CD4-positive, alpha-beta memory T cell (primary cell): ENCODE measurements at regions of chr5 and their contacts with region 1.

Region 1: GRCh38 chr5:173917788-173918786 is 29.9 kb downstream of the CPEB4 start:
- DNase-seq: peak; percentile 78 to 87 (median 83)
- H3K4me3 ChIP-seq: peak overlapping the region; percentile 49 to 74
- H3K4me3 Mint-ChIP-seq: no peak overlapping the region
- H3K27ac ChIP-seq: peak overlapping the region; percentile 89
- H3K27ac Mint-ChIP-seq: no peak overlapping the region
- H3K4me1 ChIP-seq: peaks cover 26% of the 10 kb centered on the region
- H3K4me1 Mint-ChIP-seq: peaks cover 0 to 8% (median 3%) of the 10 kb centered on the region in 4 donors
- H3K27me3 ChIP-seq: no peaks in the 10 kb centered on the region
- H3K27me3 Mint-ChIP-seq: no peaks in the 10 kb centered on the region

Region 2: GRCh38 chr5:173699966-173700365 is 218.1 kb before region 1 on chr5:
- CTCF ChIA-PET with region 1: no interaction called
- POLR2A ChIA-PET with region 1: no interaction called
- intact Hi-C with region 1: loop called (anchors 1 kb)
- DNase-seq: no peak
- H3K4me3 ChIP-seq: no peak overlapping the region
- H3K4me3 Mint-ChIP-seq: no peak overlapping the region
- H3K27ac ChIP-seq: no peak overlapping the region
- H3K27ac Mint-ChIP-seq: no peak overlapping the region
- H3K4me1 ChIP-seq: no peaks in the 10 kb centered on the region
- H3K4me1 Mint-ChIP-seq: peaks cover 10 to 18% (median 13%) of the 10 kb centered on the region in 4 donors
- H3K27me3 ChIP-seq: no peaks in the 10 kb centered on the region
- H3K27me3 Mint-ChIP-seq: peaks cover 0 to 2% of the 10 kb centered on the region in 2 donors

Region 3: GRCh38 chr5:173781814-173782670 is 136.0 kb before region 1 on chr5:
- CTCF ChIA-PET with region 1: no interaction called
- POLR2A ChIA-PET with region 1: interaction called, 4 read pairs
- intact Hi-C with region 1: loop called (anchors 2 kb)
- DNase-seq: peak; percentile 71 to 84 (median 73)
- H3K4me3 ChIP-seq: no peak overlapping the region
- H3K4me3 Mint-ChIP-seq: peak overlapping the region in 7 of 8 donors; percentile 5 to 64 (median 57)
- H3K27ac ChIP-seq: peak overlapping the region; percentile 6
- H3K27ac Mint-ChIP-seq: peak overlapping the region; percentile 81 to 96 (median 90)
- H3K4me1 ChIP-seq: peaks cover 21% of the 10 kb centered on the region
- H3K4me1 Mint-ChIP-seq: peaks cover 11 to 50% (median 20%) of the 10 kb centered on the region in 4 donors
- H3K27me3 ChIP-seq: no peaks in the 10 kb centered on the region
- H3K27me3 Mint-ChIP-seq: no peaks in the 10 kb centered on the region

Region 4: GRCh38 chr5:173887610-173888472 is 30.2 kb before region 1 on chr5 and contains the start of gene CPEB4:
- CTCF ChIA-PET with region 1: interaction called, 10 read pairs
- POLR2A ChIA-PET with region 1: interaction called, 102 read pairs
- intact Hi-C with region 1: loop called (anchors 1 kb)
- DNase-seq: peak; percentile 96 to 99 (median 98)
- H3K4me3 ChIP-seq: peak within 1 kb of the TSS; percentile 52 to 68
- H3K4me3 Mint-ChIP-seq: peak within 1 kb of the TSS; percentile 95 to 99 (median 98)
- H3K27ac ChIP-seq: peak within 1 kb of the TSS; percentile 68
- H3K27ac Mint-ChIP-seq: peak within 1 kb of the TSS; percentile 91 to 99 (median 98)
- H3K4me1 ChIP-seq: peaks cover 81% of the 10 kb centered on the region
- H3K4me1 Mint-ChIP-seq: peaks cover 69 to 92% (median 76%) of the 10 kb centered on the region in 4 donors
- H3K27me3 ChIP-seq: no peaks in the 10 kb centered on the region
- H3K27me3 Mint-ChIP-seq: no peaks in the 10 kb centered on the region
- total RNA-seq, gene CPEB4: 17.1 to 18.3 TPM

Region 5: DNA sequence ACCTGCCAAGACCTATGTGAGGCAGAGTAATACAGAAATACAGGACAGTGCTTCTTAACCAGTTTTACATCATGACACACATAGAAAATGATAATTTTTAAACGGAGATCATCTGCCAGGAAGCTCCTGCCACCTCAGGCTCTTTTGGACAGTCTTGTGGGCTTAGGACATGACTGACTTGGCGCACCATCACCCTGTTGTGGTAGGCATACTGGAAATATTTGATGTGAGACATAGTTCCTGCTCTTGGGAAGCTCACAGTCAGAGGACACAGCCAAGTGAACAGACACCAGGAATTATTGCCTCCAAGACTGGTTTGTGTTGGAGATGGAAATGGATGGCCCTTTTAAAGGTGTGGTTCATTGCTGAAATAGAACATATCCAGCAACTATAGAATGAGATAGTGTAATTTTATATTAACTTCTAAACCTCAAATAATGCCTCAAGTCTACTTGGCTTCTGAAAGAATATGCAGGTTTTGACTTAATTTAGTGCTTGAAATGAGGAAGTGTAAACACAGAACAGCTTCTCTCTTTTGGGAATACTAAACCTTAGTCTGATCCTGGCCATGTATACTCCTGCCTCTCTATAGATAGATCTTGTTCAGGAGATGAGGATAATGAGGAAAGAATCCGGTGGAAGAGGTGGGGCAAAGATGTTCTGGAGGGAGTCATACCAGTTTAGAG is 10.3 kb before region 1 on chr5:
- CTCF ChIA-PET with region 1: interaction called, 5 read pairs
- POLR2A ChIA-PET with region 1: interaction called, 16 read pairs
- intact Hi-C with region 1: no loop called
- DNase-seq: no peak
- H3K4me3 ChIP-seq: no peak overlapping the region
- H3K4me3 Mint-ChIP-seq: no peak overlapping the region
- H3K27ac ChIP-seq: no peak overlapping the region
- H3K27ac Mint-ChIP-seq: peak overlapping the region in 2 of 7 donors; percentile 24 to 41
- H3K4me1 ChIP-seq: peaks cover 18% of the 10 kb centered on the region
- H3K4me1 Mint-ChIP-seq: peaks cover 18 to 42% (median 31%) of the 10 kb centered on the region in 4 donors
- H3K27me3 ChIP-seq: no peaks in the 10 kb centered on the region
- H3K27me3 Mint-ChIP-seq: no peaks in the 10 kb centered on the region

Region 6: DNA sequence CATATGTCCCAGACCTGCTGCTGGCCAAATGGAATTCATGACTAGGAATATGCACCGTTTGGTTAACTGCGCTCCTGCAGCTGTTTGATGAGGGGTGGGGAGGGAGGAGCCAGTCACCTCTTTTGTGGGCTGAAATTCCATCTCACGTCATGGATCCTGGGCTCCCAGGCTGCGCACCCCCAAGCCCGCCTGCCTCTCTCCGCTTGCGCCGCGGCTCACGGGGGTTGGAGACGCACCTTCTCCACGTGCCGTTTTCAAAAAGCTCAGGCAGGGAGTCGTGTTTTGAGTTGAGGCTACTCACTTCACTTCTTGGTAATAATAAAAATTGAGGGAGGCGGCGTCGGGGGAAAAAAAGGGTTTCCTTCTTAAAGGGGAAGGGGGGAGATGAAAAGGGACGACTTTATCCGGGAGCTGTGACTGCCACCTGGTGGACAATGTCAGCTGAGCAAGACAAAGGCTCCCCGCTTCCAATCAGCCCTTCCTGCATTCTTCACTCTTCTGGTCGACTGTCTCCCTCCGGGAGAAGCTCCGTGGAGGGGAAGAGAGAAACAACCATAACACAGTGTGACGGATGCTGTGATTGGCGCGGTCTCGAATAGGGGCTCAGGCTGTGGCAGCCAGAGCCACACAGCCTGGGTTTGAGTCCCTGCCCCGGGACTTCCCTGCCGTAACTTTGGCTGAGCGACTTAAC is 55.0 kb after region 1 on chr5:
- CTCF ChIA-PET with region 1: interaction called, 7 read pairs
- POLR2A ChIA-PET with region 1: no interaction called
- intact Hi-C with region 1: loop called (anchors 2 kb)
- DNase-seq: peak; percentile 64 to 73 (median 70)
- H3K4me3 ChIP-seq: peak overlapping the region in 1 of 2 donors; percentile 61
- H3K4me3 Mint-ChIP-seq: peak overlapping the region; percentile 66 to 81 (median 77)
- H3K27ac ChIP-seq: no peak overlapping the region
- H3K27ac Mint-ChIP-seq: peak overlapping the region in 1 of 7 donors; percentile 14
- H3K4me1 ChIP-seq: peaks cover 12% of the 10 kb centered on the region
- H3K4me1 Mint-ChIP-seq: peaks cover 5 to 11% (median 8%) of the 10 kb centered on the region in 4 donors
- H3K27me3 ChIP-seq: no peaks in the 10 kb centered on the region
- H3K27me3 Mint-ChIP-seq: peaks cover 10 to 12% of the 10 kb centered on the region in 2 donors

Region 7: DNA sequence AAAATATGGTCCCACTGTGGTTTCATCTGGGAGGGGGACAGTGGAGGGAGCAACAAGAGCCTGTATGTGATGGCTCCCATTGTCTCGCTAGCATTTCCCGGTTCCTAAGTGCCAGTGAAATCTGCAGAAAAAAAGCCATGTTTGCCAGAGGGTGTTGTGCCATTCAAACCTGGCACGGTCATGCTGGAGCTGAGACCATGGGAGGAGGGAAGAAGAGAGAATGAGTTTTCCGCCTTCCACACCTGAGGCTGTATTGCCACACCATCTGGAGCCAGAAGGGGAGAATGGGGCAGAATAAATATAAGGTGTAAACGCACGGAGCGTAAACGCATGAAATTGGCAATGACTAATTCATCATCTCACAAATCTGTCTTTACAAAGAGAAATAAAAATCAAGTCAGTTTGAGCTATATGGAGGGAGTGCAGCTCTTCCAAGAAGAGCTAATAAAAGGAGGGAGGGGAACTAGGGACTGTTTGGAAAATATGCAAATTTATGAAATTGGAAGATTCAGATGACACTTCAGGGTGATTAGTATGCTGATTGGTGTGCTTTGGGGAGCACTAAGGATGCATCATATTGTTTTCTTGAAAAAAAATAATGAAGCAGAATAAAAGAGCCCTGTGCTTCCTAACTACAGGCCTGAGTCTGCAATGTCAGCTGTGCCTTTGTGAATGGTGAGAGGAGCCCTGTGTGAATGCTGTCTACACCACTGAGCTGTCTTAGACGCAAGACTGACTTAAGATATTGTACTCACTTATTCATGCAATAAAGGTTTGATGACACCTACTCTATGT is 365.3 kb after region 1 on chr5:
- CTCF ChIA-PET with region 1: no interaction called
- POLR2A ChIA-PET with region 1: no interaction called
- intact Hi-C with region 1: no loop called
- DNase-seq: no peak
- H3K4me3 ChIP-seq: no peak overlapping the region
- H3K4me3 Mint-ChIP-seq: no peak overlapping the region
- H3K27ac ChIP-seq: no peak overlapping the region
- H3K27ac Mint-ChIP-seq: no peak overlapping the region
- H3K4me1 ChIP-seq: no peaks in the 10 kb centered on the region
- H3K4me1 Mint-ChIP-seq: no peaks in the 10 kb centered on the region
- H3K27me3 ChIP-seq: no peaks in the 10 kb centered on the region
- H3K27me3 Mint-ChIP-seq: peaks cover 5% of the 10 kb centered on the region in 2 donors